Activated CD4-positive, alpha-beta T cell treated with anti-CD3 and anti-CD28 coated beads, Interleukin-2, amount 10 ng/mL, durations not matched to agents 7 days and 5 days (primary cell): ENCODE measurements at regions of chr12 and their contacts with region 1.

Region 1: GRCh38 chr12:68393417-68393816 is 61.3 kb upstream of the MDM1 start:
- DNase-seq: no peak
- H3K4me3 Mint-ChIP-seq: no peak overlapping the region
- H3K27ac Mint-ChIP-seq: no peak overlapping the region
- H3K4me1 Mint-ChIP-seq: peaks cover 6% of the 10 kb centered on the region
- H3K27me3 Mint-ChIP-seq: no peaks in the 10 kb centered on the region

Region 2: GRCh38 chr12:68374307-68374982 is 19.0 kb before region 1 on chr12:
- CTCF ChIA-PET with region 1: interaction called, 10 read pairs
- POLR2A ChIA-PET with region 1: no interaction called
- DNase-seq: peak; percentile 76
- H3K4me3 Mint-ChIP-seq: peak overlapping the region; percentile 6
- H3K27ac Mint-ChIP-seq: peak overlapping the region; percentile 87
- H3K4me1 Mint-ChIP-seq: peaks cover 67% of the 10 kb centered on the region
- H3K27me3 Mint-ChIP-seq: no peaks in the 10 kb centered on the region